B cell (primary cell): ENCODE measurements at regions of chr13 and their contacts with region 1.

Region 1: GRCh38 chr13:99436686-99437416 is 64.4 kb upstream of the TM9SF2 start:
- DNase-seq: peak; percentile 96
- ATAC-seq: peak; percentile 69
- H3K4me3 ChIP-seq: peak overlapping the region in 2 of 5 experiments; percentile 6 to 27
- H3K4me3 Mint-ChIP-seq: peak overlapping the region; percentile 76
- H3K27ac ChIP-seq: no peak overlapping the region
- H3K27ac Mint-ChIP-seq: peak overlapping the region; percentile 81
- H3K4me1 ChIP-seq: peaks cover 49 to 70% of the 10 kb centered on the region in 2 donors
- H3K4me1 Mint-ChIP-seq: peaks cover 64% of the 10 kb centered on the region
- H3K27me3 ChIP-seq: no peaks in the 10 kb centered on the region
- H3K27me3 Mint-ChIP-seq: no peaks in the 10 kb centered on the region
- CTCF ChIP-seq: peak; percentile 100

Region 2: DNA sequence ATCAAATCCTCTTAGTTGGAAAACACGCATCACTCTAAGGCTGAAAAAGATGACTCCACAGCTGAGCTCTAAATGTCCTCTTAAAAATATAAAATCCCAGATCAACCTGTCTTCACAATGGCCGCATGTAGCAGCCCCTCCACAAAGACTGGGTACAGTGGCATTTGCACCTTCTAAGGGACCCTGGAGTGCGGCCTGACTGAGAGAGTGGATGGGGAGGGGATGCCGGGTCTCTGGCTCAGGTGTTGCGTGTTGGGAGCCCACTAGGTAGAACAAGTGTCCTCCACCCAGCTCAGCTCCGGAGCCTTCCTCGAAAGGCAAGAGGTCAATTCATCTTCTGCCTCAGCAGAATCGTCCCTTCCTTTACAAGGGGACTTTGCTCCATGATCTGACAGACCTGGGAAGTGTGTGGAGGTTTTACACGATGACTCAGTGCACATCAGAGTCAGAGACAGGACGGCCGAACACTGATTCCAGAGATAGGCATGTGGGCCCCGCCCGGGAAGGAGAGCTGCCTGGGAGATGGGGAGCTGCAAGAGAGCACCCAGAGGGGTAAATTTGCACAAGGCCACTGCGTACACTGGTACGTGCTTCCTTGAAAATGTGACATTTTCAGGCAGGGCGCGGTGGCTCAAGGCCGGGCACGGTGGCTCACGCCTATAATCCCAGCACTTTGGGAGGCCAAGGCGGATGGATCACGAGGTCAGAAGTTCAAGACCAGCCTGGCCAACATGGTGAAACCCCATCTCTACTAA is 660.8 kb before region 1 on chr13:
- CTCF ChIA-PET with region 1: no interaction called
- POLR2A ChIA-PET with region 1: no interaction called
- intact Hi-C with region 1: no loop called
- DNase-seq: no peak
- ATAC-seq: no peak
- H3K4me3 ChIP-seq: no peak overlapping the region
- H3K4me3 Mint-ChIP-seq: no peak overlapping the region
- H3K27ac ChIP-seq: no peak overlapping the region
- H3K27ac Mint-ChIP-seq: no peak overlapping the region
- H3K4me1 ChIP-seq: no peaks in the 10 kb centered on the region
- H3K4me1 Mint-ChIP-seq: no peaks in the 10 kb centered on the region
- H3K27me3 ChIP-seq: peaks cover 0 to 4% (median 0%) of the 10 kb centered on the region in 4 experiments
- H3K27me3 Mint-ChIP-seq: peaks cover 8% of the 10 kb centered on the region
- CTCF ChIP-seq: no peak

Region 3: GRCh38 chr13:99176309-99177276 is 260.3 kb before region 1 on chr13:
- CTCF ChIA-PET with region 1: interaction called, 32 read pairs
- POLR2A ChIA-PET with region 1: no interaction called
- intact Hi-C with region 1: loop called (anchors 1 kb)
- DNase-seq: peak; percentile 88
- ATAC-seq: peak; percentile 84
- H3K4me3 ChIP-seq: no peak overlapping the region
- H3K4me3 Mint-ChIP-seq: peak overlapping the region; percentile 58
- H3K27ac ChIP-seq: no peak overlapping the region
- H3K27ac Mint-ChIP-seq: peak overlapping the region; percentile 72
- H3K4me1 ChIP-seq: peaks cover 37 to 43% of the 10 kb centered on the region in 2 donors
- H3K4me1 Mint-ChIP-seq: peaks cover 39% of the 10 kb centered on the region
- H3K27me3 ChIP-seq: no peaks in the 10 kb centered on the region
- H3K27me3 Mint-ChIP-seq: no peaks in the 10 kb centered on the region
- CTCF ChIP-seq: peak; percentile 96

Region 4: DNA sequence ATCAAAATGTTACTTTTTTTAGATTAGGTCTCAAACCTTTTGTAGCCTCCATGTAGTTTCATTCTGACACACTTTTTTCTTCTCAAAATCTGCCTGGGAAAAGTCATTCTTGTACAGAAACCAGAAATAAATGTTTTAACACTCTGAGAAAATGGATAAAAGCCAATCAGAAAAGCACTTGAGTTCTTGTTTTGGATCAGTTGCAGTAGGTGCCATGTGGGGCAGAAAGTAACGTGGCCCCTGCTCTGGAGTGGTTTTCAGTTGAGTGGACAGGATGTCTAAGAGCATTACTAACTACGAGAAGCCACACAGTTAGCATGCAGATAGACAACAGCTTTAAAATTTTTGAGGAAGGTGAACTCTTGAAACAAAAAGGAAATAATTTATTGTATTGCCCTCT is 148.8 kb before region 1 on chr13:
- CTCF ChIA-PET with region 1: interaction called, 36 read pairs
- POLR2A ChIA-PET with region 1: no interaction called
- intact Hi-C with region 1: no loop called
- DNase-seq: peak; percentile 55
- ATAC-seq: peak; percentile 73
- H3K4me3 ChIP-seq: peak overlapping the region in 1 of 5 experiments; percentile 2
- H3K4me3 Mint-ChIP-seq: peak overlapping the region; percentile 38
- H3K27ac ChIP-seq: peak overlapping the region; percentile 11 to 58
- H3K27ac Mint-ChIP-seq: peak overlapping the region; percentile 75
- H3K4me1 ChIP-seq: peaks cover 68 to 76% of the 10 kb centered on the region in 2 donors
- H3K4me1 Mint-ChIP-seq: peaks cover 83% of the 10 kb centered on the region
- H3K27me3 ChIP-seq: no peaks in the 10 kb centered on the region
- H3K27me3 Mint-ChIP-seq: no peaks in the 10 kb centered on the region
- CTCF ChIP-seq: no peak

Region 5: GRCh38 chr13:99331881-99332293 is 105.0 kb before region 1 on chr13:
- CTCF ChIA-PET with region 1: interaction called, 15 read pairs
- POLR2A ChIA-PET with region 1: no interaction called
- intact Hi-C with region 1: no loop called
- DNase-seq: no peak
- ATAC-seq: no peak
- H3K4me3 ChIP-seq: no peak overlapping the region
- H3K4me3 Mint-ChIP-seq: no peak overlapping the region
- H3K27ac ChIP-seq: no peak overlapping the region
- H3K27ac Mint-ChIP-seq: no peak overlapping the region
- H3K4me1 ChIP-seq: peaks cover 13 to 24% of the 10 kb centered on the region in 2 donors
- H3K4me1 Mint-ChIP-seq: peaks cover 44% of the 10 kb centered on the region
- H3K27me3 ChIP-seq: no peaks in the 10 kb centered on the region
- H3K27me3 Mint-ChIP-seq: no peaks in the 10 kb centered on the region
- CTCF ChIP-seq: no peak

Region 6: DNA sequence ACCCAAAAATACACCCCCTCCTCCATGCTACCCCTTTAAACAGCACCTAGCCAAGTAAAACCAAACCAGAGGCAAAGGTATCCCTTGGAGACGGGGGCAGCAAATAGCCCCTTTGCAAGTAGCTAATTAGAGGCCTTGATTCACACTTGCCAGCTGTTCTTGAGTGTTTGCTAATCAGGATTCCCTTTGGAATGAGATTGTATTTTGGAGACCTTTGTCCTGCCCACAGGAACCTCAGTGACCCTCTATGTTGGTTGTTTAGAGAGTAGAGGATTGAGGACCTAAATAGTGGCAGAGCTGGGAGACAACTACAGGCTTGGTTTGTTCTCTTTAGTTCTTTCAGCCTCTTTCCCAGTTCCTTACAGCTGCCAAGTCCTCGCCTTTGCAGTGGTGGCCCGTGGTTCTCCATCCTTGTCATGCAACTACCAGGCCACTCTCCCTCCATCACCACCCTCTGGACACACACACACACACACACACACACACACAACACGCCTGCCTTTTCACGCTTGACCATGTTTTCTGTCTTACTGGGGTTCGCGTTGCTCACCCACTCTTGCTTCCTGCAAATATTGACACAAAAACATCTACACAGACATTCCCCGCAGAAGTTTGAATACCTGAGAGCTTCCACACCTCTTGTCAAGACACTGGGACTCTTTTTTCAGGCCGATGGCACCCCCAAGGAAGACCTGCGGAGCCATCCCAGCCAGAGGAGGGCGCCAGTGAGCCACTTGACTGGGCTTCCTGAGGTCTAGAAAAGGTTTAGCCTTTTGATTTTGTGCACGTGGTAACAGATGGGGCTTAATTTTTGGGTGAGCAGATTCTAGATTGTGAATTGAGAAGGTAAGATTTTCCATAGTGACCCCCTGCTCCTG is 49.7 kb before region 1 on chr13:
- CTCF ChIA-PET with region 1: interaction called, 260 read pairs
- POLR2A ChIA-PET with region 1: interaction called, 6 read pairs
- intact Hi-C with region 1: loop called (anchors 1 kb)
- DNase-seq: peak; percentile 89
- ATAC-seq: peak; percentile 68
- H3K4me3 ChIP-seq: no peak overlapping the region
- H3K4me3 Mint-ChIP-seq: peak overlapping the region; percentile 58
- H3K27ac ChIP-seq: peak overlapping the region; percentile 8 to 69
- H3K27ac Mint-ChIP-seq: peak overlapping the region; percentile 91
- H3K4me1 ChIP-seq: peaks cover 35 to 44% of the 10 kb centered on the region in 2 donors
- H3K4me1 Mint-ChIP-seq: peaks cover 46% of the 10 kb centered on the region
- H3K27me3 ChIP-seq: no peaks in the 10 kb centered on the region
- H3K27me3 Mint-ChIP-seq: no peaks in the 10 kb centered on the region
- CTCF ChIP-seq: peak; percentile 88

Region 7: GRCh38 chr13:99542788-99543406 is 106.0 kb after region 1 on chr13:
- CTCF ChIA-PET with region 1: interaction called, 3 read pairs
- POLR2A ChIA-PET with region 1: no interaction called
- intact Hi-C with region 1: loop called (anchors 5 kb)
- DNase-seq: peak; percentile 93
- ATAC-seq: peak; percentile 97
- H3K4me3 ChIP-seq: peak overlapping the region in 2 of 5 experiments; percentile 10 to 49
- H3K4me3 Mint-ChIP-seq: peak overlapping the region; percentile 56
- H3K27ac ChIP-seq: peak overlapping the region; percentile 83 to 89
- H3K27ac Mint-ChIP-seq: peak overlapping the region; percentile 89
- H3K4me1 ChIP-seq: peaks cover 31 to 53% of the 10 kb centered on the region in 2 donors
- H3K4me1 Mint-ChIP-seq: peaks cover 50% of the 10 kb centered on the region
- H3K27me3 ChIP-seq: no peaks in the 10 kb centered on the region
- H3K27me3 Mint-ChIP-seq: no peaks in the 10 kb centered on the region
- CTCF ChIP-seq: no peak

Region 8: DNA sequence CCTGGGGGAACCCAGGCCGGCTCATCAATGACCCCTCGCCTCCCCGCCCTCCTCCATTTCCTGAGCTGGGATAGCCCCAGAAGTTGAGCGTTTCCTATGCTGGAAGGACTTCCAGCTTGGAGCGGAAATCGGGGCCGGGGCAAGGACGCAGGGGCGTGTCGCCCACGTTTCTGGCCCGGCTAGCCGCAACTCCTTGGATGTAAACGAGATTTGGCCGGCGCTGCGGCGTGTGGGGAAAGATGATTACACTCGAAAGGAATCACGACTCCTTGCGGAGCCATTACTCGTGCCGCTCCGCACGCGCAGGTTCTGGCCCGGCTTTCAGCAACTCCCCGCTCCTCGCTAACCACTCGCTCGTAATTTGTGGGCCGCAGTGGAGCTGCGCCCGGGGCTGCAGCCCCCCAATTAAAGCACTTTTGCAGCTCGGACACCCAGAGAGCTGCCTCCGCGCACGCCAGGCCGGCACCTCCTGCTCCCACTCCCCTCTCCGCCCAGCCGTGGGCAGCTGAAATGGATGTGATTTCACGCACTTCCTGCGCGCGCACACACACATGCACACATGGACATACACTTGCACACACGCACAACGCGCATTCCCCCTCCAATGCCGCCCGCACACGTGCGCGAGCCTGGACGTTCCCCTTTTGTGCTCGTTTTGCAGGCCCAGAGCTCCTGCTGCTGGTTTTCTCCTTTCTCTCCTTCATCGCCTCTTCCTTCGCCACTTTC is 519.1 kb after region 1 on chr13:
- CTCF ChIA-PET with region 1: no interaction called
- POLR2A ChIA-PET with region 1: no interaction called
- intact Hi-C with region 1: no loop called
- DNase-seq: peak; percentile 35
- ATAC-seq: no peak
- H3K4me3 ChIP-seq: peak overlapping the region in 1 of 5 experiments; percentile 36
- H3K4me3 Mint-ChIP-seq: peak overlapping the region; percentile 13
- H3K27ac ChIP-seq: no peak overlapping the region
- H3K27ac Mint-ChIP-seq: no peak overlapping the region
- H3K4me1 ChIP-seq: peaks cover 28 to 51% of the 10 kb centered on the region in 2 donors
- H3K4me1 Mint-ChIP-seq: peaks cover 18% of the 10 kb centered on the region
- H3K27me3 ChIP-seq: peaks cover 0 to 70% (median 50%) of the 10 kb centered on the region in 4 experiments
- H3K27me3 Mint-ChIP-seq: peaks cover 75% of the 10 kb centered on the region
- CTCF ChIP-seq: no peak